Prostate gland (tissue), 2 donors: ENCODE measurements at regions of chr1 and their contacts with region 1.

Region 1: GRCh38 chr1:183281553-183282091 is 95.6 kb downstream of the LAMC2 start:
- DNase-seq: peak; percentile 86
- H3K4me3 ChIP-seq: no peak overlapping the region
- H3K27ac ChIP-seq: peak overlapping the region; percentile 10 to 39
- H3K4me1 ChIP-seq: no peaks in the 10 kb centered on the region
- H3K27me3 ChIP-seq: no peaks in the 10 kb centered on the region
- CTCF ChIP-seq: peak; percentile 67 to 92 (median 88)
- POLR2A ChIP-seq: no peak

Region 2: GRCh38 chr1:183318433-183318832 is 36.8 kb after region 1 on chr1:
- intact Hi-C with region 1: loop called (anchors 2 kb)
- DNase-seq: peak; percentile 61
- H3K4me3 ChIP-seq: no peak overlapping the region
- H3K27ac ChIP-seq: peak overlapping the region in 1 of 2 donors; percentile 26
- H3K4me1 ChIP-seq: no peaks in the 10 kb centered on the region
- H3K27me3 ChIP-seq: no peaks in the 10 kb centered on the region
- CTCF ChIP-seq: peak in 2 of 4 experiments; percentile 61 to 64
- POLR2A ChIP-seq: no peak

Region 3: GRCh38 chr1:183580281-183580682 is 298.7 kb after region 1 on chr1:
- intact Hi-C with region 1: no loop called
- DNase-seq: no peak
- H3K4me3 ChIP-seq: no peak overlapping the region
- H3K27ac ChIP-seq: no peak overlapping the region
- H3K4me1 ChIP-seq: no peaks in the 10 kb centered on the region
- H3K27me3 ChIP-seq: no peaks in the 10 kb centered on the region
- CTCF ChIP-seq: no peak
- POLR2A ChIP-seq: no peak

Region 4: GRCh38 chr1:183609313-183609712 is 327.7 kb after region 1 on chr1:
- intact Hi-C with region 1: loop called (anchors 10 kb)
- DNase-seq: no peak
- H3K4me3 ChIP-seq: no peak overlapping the region
- H3K27ac ChIP-seq: peak overlapping the region; percentile 31
- H3K4me1 ChIP-seq: no peaks in the 10 kb centered on the region
- H3K27me3 ChIP-seq: no peaks in the 10 kb centered on the region
- CTCF ChIP-seq: peak in 2 of 4 experiments; percentile 31 to 42
- POLR2A ChIP-seq: no peak